CD14-positive monocyte (primary cell): ENCODE measurements at regions of chr9 and their contacts with region 1.

Region 1: DNA sequence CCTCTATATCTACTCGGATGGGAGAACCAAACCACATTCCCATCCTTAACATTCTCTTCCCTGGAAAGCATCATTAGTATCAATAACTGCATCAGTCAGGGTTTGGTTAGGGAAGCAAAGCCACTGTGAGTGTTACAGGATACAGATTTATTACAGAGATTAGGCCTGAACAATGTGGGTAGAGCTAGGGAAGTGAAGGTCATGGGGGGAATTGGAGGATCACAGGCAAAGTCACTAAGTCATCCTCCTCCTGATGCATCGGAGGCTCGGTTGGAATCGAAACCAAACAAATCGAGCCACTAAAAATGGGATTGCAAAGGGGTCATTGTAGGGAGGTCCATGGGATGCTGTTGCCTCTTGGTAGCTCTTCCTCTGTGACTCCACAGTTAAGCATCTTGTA is 61.8 kb upstream of the ZBTB43 start:
- DNase-seq: no peak
- H3K4me3 ChIP-seq: no peak overlapping the region
- H3K4me3 Mint-ChIP-seq: peak overlapping the region; percentile 17 to 64
- H3K27ac ChIP-seq: no peak overlapping the region
- H3K27ac Mint-ChIP-seq: no peak overlapping the region
- H3K4me1 ChIP-seq: peaks cover 18 to 29% of the 10 kb centered on the region in 2 donors
- H3K4me1 Mint-ChIP-seq: peaks cover 36% of the 10 kb centered on the region
- H3K27me3 ChIP-seq: no peaks in the 10 kb centered on the region
- H3K27me3 Mint-ChIP-seq: peaks cover 0 to 7% (median 5%) of the 10 kb centered on the region in 3 donors
- CTCF ChIP-seq: no peak

Region 2: GRCh38 chr9:126532019-126532462 is 211.0 kb before region 1 on chr9:
- intact Hi-C with region 1: no loop called
- DNase-seq: no peak
- H3K4me3 ChIP-seq: peak overlapping the region in 1 of 3 experiments; percentile 3
- H3K4me3 Mint-ChIP-seq: no peak overlapping the region
- H3K27ac ChIP-seq: peak overlapping the region; percentile 84 to 88
- H3K27ac Mint-ChIP-seq: peak overlapping the region in 5 of 7 donors; percentile 19 to 92 (median 90)
- H3K4me1 ChIP-seq: peaks cover 56 to 57% of the 10 kb centered on the region in 2 donors
- H3K4me1 Mint-ChIP-seq: peaks cover 65% of the 10 kb centered on the region
- H3K27me3 ChIP-seq: no peaks in the 10 kb centered on the region
- H3K27me3 Mint-ChIP-seq: peaks cover 0 to 2% (median 0%) of the 10 kb centered on the region in 3 donors
- CTCF ChIP-seq: no peak

Region 3: DNA sequence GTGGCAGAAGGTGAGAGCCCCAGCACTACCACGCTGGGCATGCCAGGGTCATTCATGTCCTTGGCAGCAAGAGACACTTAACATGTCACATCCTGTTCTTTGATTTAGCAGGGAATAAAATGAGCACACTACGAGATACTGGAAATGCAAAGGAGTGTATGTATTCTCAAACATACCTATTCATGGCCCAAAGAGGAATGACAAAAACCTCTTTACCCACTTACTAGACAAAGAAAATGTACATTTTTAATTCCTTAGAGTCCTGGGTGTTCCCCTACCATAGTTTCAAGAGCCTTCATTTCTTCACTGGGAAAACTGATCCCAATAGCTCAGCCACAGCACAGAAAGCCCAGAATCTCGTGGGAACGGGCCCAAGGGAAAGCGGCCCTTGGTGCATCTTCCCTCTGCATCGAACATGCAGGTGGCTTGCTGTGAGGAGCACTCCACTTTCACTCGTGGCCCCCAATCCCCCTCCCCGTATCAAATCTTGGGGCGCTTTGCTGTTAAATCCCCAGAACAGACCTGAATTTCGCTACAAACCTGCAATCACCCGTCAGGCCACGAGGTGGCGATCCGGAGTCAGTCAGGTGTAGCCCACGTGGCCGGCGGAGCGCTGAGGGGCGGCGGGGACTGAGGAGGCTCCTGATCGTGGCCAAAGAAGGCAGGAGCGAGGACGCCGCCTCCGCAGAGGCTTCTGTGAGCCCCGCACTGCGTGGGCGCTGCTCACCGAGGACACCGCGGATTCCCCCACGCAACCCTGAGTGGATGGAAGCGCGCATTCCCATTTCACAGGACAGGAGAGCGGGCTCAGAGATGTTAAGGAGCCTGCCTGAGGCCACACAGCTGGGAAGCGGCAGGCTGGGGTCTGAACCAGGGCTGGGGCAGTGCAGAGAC is 37.9 kb before region 1 on chr9:
- intact Hi-C with region 1: loop called in 1 of 2 experiments (anchors 5 kb)
- DNase-seq: peak; percentile 69 to 75 (median 73)
- H3K4me3 ChIP-seq: peak overlapping the region in 2 of 3 experiments; percentile 0 to 72
- H3K4me3 Mint-ChIP-seq: peak overlapping the region; percentile 56 to 77
- H3K27ac ChIP-seq: no peak overlapping the region
- H3K27ac Mint-ChIP-seq: peak overlapping the region in 3 of 7 donors; percentile 41 to 49 (median 45)
- H3K4me1 ChIP-seq: peaks cover 12 to 21% of the 10 kb centered on the region in 2 donors
- H3K4me1 Mint-ChIP-seq: peaks cover 19% of the 10 kb centered on the region
- H3K27me3 ChIP-seq: peaks cover 0 to 18% of the 10 kb centered on the region in 2 donors
- H3K27me3 Mint-ChIP-seq: peaks cover 21 to 45% (median 32%) of the 10 kb centered on the region in 3 donors
- CTCF ChIP-seq: peak; percentile 90

Region 4: DNA sequence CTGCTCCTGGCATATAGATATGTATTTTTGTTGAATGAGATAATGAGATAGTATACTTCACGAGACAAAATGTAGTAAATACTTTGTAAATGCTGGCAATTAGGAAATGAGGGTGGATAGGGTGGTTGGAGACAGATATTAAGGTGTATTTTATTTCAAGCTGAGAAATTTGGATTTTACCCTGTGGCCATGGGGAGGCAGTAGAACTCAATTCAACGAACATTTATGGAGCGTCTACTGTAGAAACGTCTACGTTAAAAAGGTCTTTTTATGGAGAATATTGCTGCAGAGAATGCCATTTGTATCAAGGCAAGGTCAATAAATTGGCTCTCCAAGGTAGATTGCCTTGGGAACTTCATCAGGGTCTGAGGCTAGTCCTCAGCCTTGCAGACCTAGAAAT is 150.0 kb after region 1 on chr9:
- intact Hi-C with region 1: no loop called
- DNase-seq: no peak
- H3K4me3 ChIP-seq: no peak overlapping the region
- H3K4me3 Mint-ChIP-seq: no peak overlapping the region
- H3K27ac ChIP-seq: no peak overlapping the region
- H3K27ac Mint-ChIP-seq: no peak overlapping the region
- H3K4me1 ChIP-seq: peaks cover 0 to 4% of the 10 kb centered on the region in 2 donors
- H3K4me1 Mint-ChIP-seq: peaks cover 13% of the 10 kb centered on the region
- H3K27me3 ChIP-seq: no peaks in the 10 kb centered on the region
- H3K27me3 Mint-ChIP-seq: peaks cover 2 to 5% (median 4%) of the 10 kb centered on the region in 3 donors
- CTCF ChIP-seq: peak; percentile 13